ENCODE measurements at regions of chr5 and their contacts with region 1.

Region 1: GRCh38 chr5:122076664-122077365 is 1.2 kb downstream of the LOX start:
- DNase-seq: peak; percentile 86 to 94
- ATAC-seq: peak; percentile 91
- H3K4me3 ChIP-seq: peak overlapping the region; percentile 78 to 84
- H3K27ac ChIP-seq: peak overlapping the region; percentile 72 to 96
- H3K4me1 ChIP-seq: peaks cover under 1 to 3% of the 10 kb centered on the region in 2 donors
- H3K27me3 ChIP-seq: no peaks in the 10 kb centered on the region

Region 2: GRCh38 chr5:121962347-121962670 is 114.5 kb before region 1 on chr5:
- intact Hi-C with region 1: loop called in 1 of 2 experiments (anchors 5 kb)
- DNase-seq: no peak
- ATAC-seq: no peak
- H3K4me3 ChIP-seq: peak overlapping the region; percentile 61 to 88
- H3K27ac ChIP-seq: no peak overlapping the region
- H3K4me1 ChIP-seq: peaks cover 0 to 6% of the 10 kb centered on the region in 2 donors
- H3K27me3 ChIP-seq: no peaks in the 10 kb centered on the region

Region 3: DNA sequence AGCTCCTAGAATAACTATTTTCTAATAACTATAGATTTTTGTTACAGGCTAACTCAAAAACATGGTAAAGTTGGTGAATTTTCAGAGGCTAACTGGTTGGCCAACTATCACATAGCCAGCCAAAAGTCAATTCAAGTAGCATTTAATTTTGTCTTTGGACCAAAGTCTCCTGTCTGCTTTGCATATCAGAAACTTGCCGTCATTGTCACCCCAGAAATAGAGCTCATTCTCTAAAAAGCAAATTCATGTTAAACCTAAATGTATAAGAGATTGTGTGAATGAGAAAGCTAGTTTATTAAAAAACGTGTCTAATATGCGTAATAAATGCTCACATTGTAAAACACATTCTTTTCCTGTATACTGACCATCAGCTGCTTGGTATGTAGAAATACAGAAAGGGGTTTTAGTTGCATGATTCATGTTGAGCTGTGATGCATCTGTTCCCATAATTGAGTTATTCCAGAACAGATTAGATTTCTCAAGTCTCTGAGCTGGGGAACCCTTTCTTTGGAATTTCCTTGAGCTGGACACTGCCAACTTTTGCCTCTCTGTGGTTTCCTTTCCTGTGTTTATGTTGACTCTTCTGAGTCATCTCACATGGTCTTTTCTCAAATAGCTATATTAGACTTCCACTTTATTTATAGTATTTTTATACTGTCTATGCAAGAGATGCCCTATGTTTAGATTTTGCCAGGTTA is 107.8 kb before region 1 on chr5:
- intact Hi-C with region 1: loop called (anchors 5 kb)
- DNase-seq: peak in 1 of 2 donors; percentile 31
- ATAC-seq: peak; percentile 80
- H3K4me3 ChIP-seq: no peak overlapping the region
- H3K27ac ChIP-seq: no peak overlapping the region
- H3K4me1 ChIP-seq: peaks cover 0 to 5% of the 10 kb centered on the region in 2 donors
- H3K27me3 ChIP-seq: no peaks in the 10 kb centered on the region

Region 4: DNA sequence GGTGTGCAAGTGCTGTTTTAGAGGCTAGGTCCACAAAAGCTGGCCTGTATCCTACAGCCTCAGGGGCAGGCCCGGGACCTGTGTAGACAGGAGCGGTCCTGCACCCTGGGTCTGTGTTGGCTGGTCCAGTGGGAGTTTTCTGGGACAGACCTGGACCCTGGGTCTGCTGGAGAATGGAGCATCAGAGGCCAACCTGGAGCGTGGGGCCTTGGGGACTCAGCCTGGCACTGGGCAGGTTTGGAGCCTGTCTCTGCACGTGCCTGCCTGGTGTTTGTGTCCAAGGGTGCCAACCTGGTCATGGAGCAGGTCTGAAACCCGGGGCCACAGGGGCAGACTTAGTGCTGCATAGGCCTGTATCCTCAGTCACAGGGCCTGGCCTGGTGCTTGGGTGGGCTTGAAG is 69.3 kb before region 1 on chr5:
- intact Hi-C with region 1: no loop called
- DNase-seq: peak in 1 of 2 donors; percentile 25
- ATAC-seq: peak; percentile 7
- H3K4me3 ChIP-seq: no peak overlapping the region
- H3K27ac ChIP-seq: no peak overlapping the region
- H3K4me1 ChIP-seq: no peaks in the 10 kb centered on the region
- H3K27me3 ChIP-seq: no peaks in the 10 kb centered on the region

Region 5: DNA sequence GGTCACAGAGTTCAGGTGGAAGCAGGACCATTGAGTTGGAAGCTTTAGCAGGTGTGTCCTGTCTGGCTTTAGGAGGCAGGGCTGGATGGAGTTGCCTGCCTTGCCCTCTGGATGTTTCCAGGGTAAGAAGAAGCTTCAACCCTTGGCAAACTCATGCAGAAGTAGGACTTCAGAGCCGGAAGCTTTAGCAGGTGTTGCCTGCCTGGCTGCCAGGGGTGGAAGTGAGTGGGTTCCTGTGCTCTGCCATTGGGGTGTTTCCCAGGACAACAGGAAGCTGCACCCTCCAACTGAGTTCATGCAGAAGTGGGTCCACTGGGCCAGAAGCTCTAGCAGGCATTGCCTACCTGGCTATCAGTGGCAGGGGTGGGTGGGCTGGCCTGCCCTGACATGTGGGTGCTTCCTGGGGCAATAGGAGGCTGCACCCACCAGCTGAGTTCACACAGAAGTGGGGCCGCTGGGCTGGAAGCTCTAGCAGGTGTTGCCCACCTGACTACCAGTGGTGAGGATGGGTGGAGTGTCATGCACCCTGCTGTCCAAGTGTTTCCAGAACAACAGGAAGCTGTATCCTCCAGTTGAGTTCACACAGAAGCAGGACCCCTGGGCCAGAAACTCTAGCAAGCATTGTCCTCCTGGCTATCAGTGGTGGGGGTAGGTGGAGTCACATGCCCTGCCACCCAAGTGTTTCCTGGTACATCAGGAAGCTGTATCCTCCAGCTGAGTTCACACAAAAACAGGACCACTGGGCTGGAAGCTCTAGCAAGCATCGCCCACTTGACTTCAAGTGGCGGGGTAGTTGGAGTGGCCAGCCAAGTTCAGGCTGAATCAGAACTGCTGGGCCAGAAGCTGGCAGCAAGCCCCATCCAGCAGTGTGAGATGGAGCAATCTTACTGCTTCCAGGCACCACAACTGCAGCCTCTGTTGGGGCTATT is 23.4 kb before region 1 on chr5:
- intact Hi-C with region 1: no loop called
- DNase-seq: peak; percentile 51 to 64
- ATAC-seq: no peak
- H3K4me3 ChIP-seq: no peak overlapping the region
- H3K27ac ChIP-seq: no peak overlapping the region
- H3K4me1 ChIP-seq: no peaks in the 10 kb centered on the region
- H3K27me3 ChIP-seq: no peaks in the 10 kb centered on the region

Region 6: GRCh38 chr5:122154910-122155309 is 78.1 kb after region 1 on chr5:
- intact Hi-C with region 1: loop called in 1 of 2 experiments (anchors 5 kb)
- DNase-seq: peak; percentile 77 to 80
- ATAC-seq: peak; percentile 67
- H3K4me3 ChIP-seq: no peak overlapping the region
- H3K27ac ChIP-seq: peak overlapping the region in 1 of 2 donors; percentile 69
- H3K4me1 ChIP-seq: peaks cover 8 to 15% of the 10 kb centered on the region in 2 donors
- H3K27me3 ChIP-seq: no peaks in the 10 kb centered on the region